ENCODE measurements at regions of chr16 and their contacts with region 1.

Region 1: DNA sequence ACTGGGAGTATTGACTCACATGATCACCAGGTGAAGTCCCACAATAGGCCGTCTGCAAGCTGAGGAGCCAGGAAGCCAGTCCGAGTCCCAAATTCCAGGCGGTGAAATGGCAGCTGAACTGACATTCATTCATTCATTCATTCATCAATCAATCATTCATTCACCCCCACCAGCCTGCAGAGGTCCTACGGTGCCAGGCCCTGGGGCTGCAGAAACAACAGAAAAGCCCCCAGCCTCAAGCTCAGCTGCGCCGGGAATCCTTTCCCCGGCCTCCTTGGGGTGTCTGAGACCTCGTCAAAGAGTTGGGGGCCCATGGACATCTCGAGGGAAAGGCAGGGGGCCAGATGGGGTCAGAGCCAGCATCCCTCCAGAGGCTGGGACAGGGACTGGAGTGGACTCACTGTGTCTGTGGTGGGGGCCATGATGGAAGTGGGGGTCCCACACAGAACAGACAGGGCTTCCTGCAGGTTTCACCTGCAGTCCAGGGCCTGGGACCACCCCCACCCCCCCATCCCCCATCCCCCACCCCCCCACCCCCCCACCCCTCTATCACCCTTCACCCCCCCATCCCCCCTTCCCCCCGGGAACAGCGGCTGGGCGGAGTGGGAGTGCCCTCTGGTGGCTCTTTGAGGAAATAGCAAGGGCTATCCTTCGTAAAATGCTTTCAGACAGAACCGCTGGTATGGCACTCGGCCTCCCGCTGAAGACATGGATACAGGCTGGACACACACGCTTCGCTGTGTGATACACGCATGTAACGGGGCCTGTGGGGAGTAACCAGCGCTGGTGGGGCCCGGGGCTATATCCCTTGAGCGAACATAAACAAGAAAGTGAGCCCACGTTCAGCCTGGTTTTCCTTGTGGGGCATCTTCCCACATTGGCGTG is 8.5 kb upstream of the ZC3H18 start:
- DNase-seq: peak; percentile 49
- ATAC-seq: peak; percentile 94
- H3K4me3 Mint-ChIP-seq: no peak overlapping the region
- H3K27ac Mint-ChIP-seq: no peak overlapping the region
- H3K4me1 Mint-ChIP-seq: peaks cover 5% of the 10 kb centered on the region
- H3K27me3 Mint-ChIP-seq: peaks cover 7% of the 10 kb centered on the region
- CTCF ChIP-seq: no peak

Region 2: DNA sequence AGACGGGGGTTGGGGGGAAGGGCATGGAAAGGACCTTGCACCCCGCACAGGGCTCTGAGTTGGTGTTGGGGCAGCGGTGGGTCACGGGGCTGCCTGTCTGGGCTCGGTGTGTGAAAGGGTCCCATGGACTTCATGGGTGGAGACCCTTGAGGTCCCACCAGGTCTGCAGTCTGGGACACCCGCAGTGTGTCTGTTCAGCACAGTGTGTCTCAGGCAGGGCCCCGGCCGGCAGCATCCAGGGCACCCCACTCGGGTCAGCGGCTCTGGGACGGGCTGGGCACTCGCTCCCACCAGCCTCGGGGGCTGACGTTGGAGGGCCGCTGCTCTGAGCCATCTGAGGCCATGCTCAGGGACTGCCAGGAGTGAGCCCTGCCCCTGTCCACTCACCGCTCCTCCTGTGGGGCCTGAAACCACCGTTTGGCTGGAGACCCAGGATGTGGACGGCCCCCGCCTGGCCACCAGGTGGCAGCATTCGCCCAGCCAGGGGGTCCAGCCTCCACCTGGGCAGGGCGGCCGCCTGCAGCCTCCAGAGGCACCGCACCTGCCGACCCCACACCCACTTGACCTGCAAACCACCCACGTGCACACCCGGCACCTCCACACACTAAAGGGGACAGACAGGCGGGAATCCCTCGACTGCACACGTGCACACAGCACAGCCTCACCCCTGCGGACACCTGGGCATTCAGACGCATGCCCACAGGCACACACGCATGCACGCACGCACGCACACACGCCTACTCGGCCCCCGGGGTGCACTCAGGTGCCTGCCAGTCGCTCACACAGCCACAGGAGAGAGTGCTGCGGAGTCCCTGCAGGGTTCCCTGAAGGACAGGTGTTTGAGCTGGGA is 118.8 kb before region 1 on chr16:
- CTCF ChIA-PET with region 1: interaction called, 7 read pairs
- POLR2A ChIA-PET with region 1: interaction called, 3 read pairs
- intact Hi-C with region 1: loop called (anchors 1 kb)
- DNase-seq: peak; percentile 83
- ATAC-seq: peak; percentile 89
- H3K4me3 Mint-ChIP-seq: no peak overlapping the region
- H3K27ac Mint-ChIP-seq: peak overlapping the region; percentile 12
- H3K4me1 Mint-ChIP-seq: peaks cover 5% of the 10 kb centered on the region
- H3K27me3 Mint-ChIP-seq: no peaks in the 10 kb centered on the region
- CTCF ChIP-seq: peak; percentile 57

Region 3: GRCh38 chr16:88527186-88527936 is 34.4 kb before region 1 on chr16:
- CTCF ChIA-PET with region 1: no interaction called
- POLR2A ChIA-PET with region 1: no interaction called
- intact Hi-C with region 1: loop called (anchors 1 kb)
- DNase-seq: peak; percentile 73
- ATAC-seq: peak; percentile 87
- H3K4me3 Mint-ChIP-seq: no peak overlapping the region
- H3K27ac Mint-ChIP-seq: no peak overlapping the region
- H3K4me1 Mint-ChIP-seq: peaks cover 5% of the 10 kb centered on the region
- H3K27me3 Mint-ChIP-seq: no peaks in the 10 kb centered on the region
- CTCF ChIP-seq: peak; percentile 23

Region 4: DNA sequence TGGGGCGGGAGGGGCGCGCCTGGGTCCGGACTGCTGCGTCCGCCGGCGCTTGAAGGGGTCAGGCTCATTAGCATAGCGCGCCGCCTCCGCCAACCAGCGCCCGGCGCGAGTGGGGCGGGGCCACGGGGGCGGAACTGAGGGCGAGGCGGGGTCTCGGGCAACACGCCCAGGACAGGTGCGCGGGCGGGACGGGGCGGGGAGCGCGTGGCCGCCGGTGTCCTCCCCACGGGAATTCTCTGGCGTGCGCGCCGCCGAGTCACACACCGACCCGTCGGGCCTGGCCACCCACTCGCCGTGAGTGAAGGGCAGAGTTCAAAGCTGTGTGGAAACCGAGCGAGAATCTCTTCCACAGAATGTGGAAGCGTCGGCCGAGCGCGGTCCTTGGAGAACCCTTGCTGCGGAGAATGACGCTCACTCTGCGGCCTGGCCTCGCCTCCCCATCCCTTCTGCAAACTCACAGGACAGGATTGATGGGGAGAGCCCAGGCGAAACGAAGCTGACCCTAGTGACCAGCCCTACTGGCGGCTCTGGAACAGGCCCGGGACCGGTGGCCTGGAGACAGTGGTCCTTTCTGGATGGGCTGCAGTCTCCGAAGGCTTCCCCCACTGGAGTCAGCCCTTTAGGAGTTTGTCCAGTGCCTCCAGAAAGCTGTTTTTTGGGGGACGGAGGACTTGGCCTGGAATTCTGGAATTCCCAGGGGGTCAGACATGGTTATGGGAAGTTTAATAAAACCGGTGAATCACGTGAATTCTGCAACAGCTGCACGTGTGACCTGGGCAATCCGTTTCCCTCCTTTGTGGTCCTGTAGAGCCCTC is 124.9 kb after region 1 on chr16 and contains the start of gene SNAI3:
- CTCF ChIA-PET with region 1: no interaction called
- POLR2A ChIA-PET with region 1: no interaction called
- intact Hi-C with region 1: no loop called
- DNase-seq: peak; percentile 94
- ATAC-seq: peak; percentile 74
- H3K4me3 Mint-ChIP-seq: peak within 1 kb of the TSS; percentile 83
- H3K27ac Mint-ChIP-seq: no peak within 1 kb of the TSS
- H3K4me1 Mint-ChIP-seq: peaks cover 46% of the 10 kb centered on the region
- H3K27me3 Mint-ChIP-seq: no peaks in the 10 kb centered on the region
- CTCF ChIP-seq: no peak
- total RNA-seq, gene SNAI3: 1.5 and 2.7 TPM in 2 replicates

Measured in activated B cell treated with CpG ODN at 0.5 μM for 24 hours (primary cell).